ENCODE measurements at regions of chr16 and their contacts with region 1.

Region 1: GRCh38 chr16:68503334-68503733 is 35.8 kb upstream of the ZFP90 start:
- DNase-seq: no peak
- H3K4me3 ChIP-seq: no peak overlapping the region
- H3K27ac ChIP-seq: no peak overlapping the region
- H3K4me1 ChIP-seq: no peaks in the 10 kb centered on the region
- H3K27me3 ChIP-seq: peaks cover 0 to 3% (median 0%) of the 10 kb centered on the region in 3 donors
- CTCF ChIP-seq: no peak
- EP300 ChIP-seq: no peak
- POLR2A ChIP-seq: no peak

Region 2: DNA sequence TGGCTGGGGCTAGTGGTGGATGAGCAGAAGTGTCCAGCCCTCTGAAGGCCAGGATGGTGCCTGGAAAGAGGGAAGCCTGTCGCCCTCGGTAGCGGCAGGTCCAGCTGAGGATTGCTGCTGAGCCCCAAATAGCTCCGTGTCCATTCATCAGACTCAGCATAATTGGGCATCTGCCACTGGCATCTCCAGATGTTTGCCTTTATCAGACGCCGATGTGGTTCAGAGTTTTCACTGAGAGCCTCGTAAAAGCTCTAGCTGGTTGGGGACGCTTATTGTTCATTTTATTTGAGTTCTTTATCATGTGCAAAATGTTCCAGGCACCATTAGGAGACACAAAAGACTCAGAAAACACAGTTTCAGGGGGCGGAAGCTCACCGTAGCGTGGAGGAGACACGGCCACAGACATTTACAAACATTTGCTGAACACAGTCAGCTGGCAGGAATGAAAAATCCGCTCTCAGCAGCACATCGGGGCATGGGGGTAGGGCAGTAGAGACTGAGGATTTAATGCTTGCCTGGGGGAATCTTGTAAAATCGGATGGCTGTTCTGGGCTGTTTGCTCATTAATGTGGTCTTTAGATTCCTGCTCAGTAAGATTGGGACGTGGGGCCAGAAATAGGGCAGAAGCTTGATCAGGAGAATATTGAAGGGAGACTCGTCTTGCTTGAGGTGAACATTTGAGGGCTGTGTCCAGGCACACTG is 96.7 kb before region 1 on chr16:
- intact Hi-C with region 1: loop called (anchors 10 kb)
- DNase-seq: peak in 1 of 2 donors; percentile 44
- H3K4me3 ChIP-seq: no peak overlapping the region
- H3K27ac ChIP-seq: peak overlapping the region; percentile 28 to 58 (median 43)
- H3K4me1 ChIP-seq: peaks cover 7 to 18% (median 10%) of the 10 kb centered on the region in 4 donors
- H3K27me3 ChIP-seq: peaks cover 0 to 16% (median 0%) of the 10 kb centered on the region in 3 donors
- CTCF ChIP-seq: no peak
- EP300 ChIP-seq: no peak
- POLR2A ChIP-seq: no peak

Region 3: GRCh38 chr16:68448360-68448970 is 54.9 kb before region 1 on chr16 and contains the start of gene SMPD3:
- intact Hi-C with region 1: loop called (anchors 10 kb)
- DNase-seq: peak; percentile 99
- H3K4me3 ChIP-seq: peak within 1 kb of the TSS; percentile 53 to 77 (median 66)
- H3K27ac ChIP-seq: peak within 1 kb of the TSS in 2 of 5 donors; percentile 37 to 60
- H3K4me1 ChIP-seq: peaks cover 18 to 32% (median 26%) of the 10 kb centered on the region in 4 donors
- H3K27me3 ChIP-seq: peaks cover 0 to 25% (median 4%) of the 10 kb centered on the region in 3 donors
- CTCF ChIP-seq: peak in 2 of 7 experiments; percentile 10 to 11
- EP300 ChIP-seq: no peak
- POLR2A ChIP-seq: no peak
- total RNA-seq, gene SMPD3: 34.3 to 110 (median 76.3) TPM